Common myeloid progenitor, CD34-positive (primary cell): ENCODE measurements at regions of chr15 and their contacts with region 1.

Region 1: DNA sequence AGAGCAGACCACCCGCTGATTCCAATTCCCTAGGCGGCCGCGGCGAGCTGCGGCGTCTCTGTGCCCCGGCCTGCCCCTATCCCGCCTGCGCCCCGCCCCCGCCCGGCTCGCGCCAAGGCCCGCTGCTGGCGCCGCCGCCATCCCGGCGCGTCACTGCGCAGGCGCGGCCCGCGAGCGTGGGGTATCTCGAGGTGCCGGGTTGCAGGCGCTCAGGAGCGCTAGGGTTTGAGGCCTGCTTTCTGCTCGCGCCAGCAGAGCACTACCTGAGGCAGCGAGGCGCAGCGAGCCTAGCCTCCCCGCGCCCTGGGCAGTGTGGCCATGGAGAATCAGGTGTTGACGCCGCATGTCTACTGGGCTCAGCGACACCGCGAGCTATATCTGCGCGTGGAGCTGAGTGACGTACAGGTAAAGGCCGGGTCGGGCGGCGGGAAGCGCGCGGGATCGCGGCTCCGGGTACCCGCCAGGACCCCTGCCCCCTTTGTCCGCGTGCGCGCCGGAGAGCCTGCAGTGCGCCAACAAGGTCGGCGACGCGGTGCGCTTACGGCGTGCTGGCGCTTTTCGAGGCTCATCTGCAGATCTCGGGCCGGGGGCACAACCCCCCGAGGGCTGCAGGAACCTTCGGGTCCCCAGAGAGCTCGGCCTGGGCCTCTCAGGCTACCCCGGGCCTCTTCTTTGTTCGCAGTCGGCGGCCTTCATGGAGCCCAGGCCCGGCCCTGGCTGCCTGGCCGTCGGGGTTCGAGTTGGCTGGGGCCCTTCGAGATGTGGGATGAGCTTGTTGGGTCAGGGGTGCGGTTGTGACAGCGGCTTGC is at the start of gene HACD3:
- DNase-seq: peak; percentile 83 to 88 (median 86)
- H3K4me3 ChIP-seq: peak within 1 kb of the TSS; percentile 64 to 87 (median 77)
- H3K27ac ChIP-seq: peak within 1 kb of the TSS in 1 of 2 experiments; percentile 59
- H3K4me1 ChIP-seq: peaks cover 0 to 22% (median 13%) of the 10 kb centered on the region in 4 experiments
- H3K27me3 ChIP-seq: no peaks in the 10 kb centered on the region

Region 2: GRCh38 chr15:65494071-65494470 is 36.4 kb before region 1 on chr15:
- CTCF ChIA-PET with region 1: no interaction called
- POLR2A ChIA-PET with region 1: no interaction called
- DNase-seq: no peak
- H3K4me3 ChIP-seq: no peak overlapping the region
- H3K27ac ChIP-seq: no peak overlapping the region
- H3K4me1 ChIP-seq: no peaks in the 10 kb centered on the region
- H3K27me3 ChIP-seq: no peaks in the 10 kb centered on the region

Region 3: DNA sequence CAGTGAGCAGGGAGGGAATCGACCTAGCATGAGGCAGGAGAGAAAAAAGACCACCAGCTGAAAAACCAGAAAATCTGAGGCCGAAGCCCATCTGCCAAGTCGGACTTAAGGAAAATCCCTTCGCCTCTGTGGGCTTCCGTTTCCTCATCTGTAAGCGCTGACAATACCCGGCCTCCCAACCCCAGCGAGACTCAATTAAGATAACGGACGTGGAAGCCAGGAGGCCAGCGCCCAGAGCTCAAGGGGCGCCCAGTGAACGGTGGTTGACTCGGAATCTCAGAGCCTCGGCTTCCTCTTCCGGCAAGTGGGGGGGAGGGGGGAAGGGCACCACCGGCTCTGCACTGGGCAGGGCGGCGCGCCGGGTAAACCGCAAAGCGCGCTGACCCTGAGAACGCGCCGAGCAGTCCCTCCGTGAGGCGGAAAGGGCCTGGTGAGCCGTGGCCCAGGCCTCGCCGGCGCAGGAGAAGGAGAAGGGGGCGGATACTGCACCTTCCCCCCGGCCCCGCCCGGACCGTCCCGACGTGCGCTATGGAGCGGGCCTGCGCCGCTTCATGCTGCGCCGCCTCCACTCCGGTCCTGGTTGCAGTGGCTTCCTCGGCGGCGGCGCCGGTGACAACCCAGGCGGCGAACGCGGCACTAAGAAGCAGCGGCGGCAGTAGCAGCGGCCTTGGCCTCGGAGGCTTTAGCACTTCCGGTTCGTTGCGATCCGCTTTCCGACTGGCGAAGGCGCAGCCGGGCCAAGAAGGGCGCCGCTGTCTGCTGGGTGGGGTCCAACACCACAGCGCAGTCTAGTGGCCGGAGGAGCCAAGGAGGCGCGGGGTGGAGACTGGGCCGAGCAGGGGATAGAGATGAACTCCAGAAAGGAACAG is 13.3 kb before region 1 on chr15 and contains the start of gene DPP8:
- CTCF ChIA-PET with region 1: interaction called, 10 read pairs
- POLR2A ChIA-PET with region 1: no interaction called
- DNase-seq: peak; percentile 96 to 97 (median 97)
- H3K4me3 ChIP-seq: peak within 1 kb of the TSS; percentile 86 to 99 (median 93)
- H3K27ac ChIP-seq: peak within 1 kb of the TSS; percentile 67 to 95
- H3K4me1 ChIP-seq: peaks cover 9 to 22% (median 14%) of the 10 kb centered on the region in 4 experiments
- H3K27me3 ChIP-seq: no peaks in the 10 kb centered on the region